CD4-positive, alpha-beta T cell (primary cell): ENCODE measurements at regions of chr12 and their contacts with region 1.

Region 1: GRCh38 chr12:6873094-6874014 is at the start of gene SPSB2:
- DNase-seq: peak; percentile 96 to 100 (median 99)
- ATAC-seq: peak; percentile 89
- H3K4me3 ChIP-seq: peak within 1 kb of the TSS; percentile 93
- H3K4me3 Mint-ChIP-seq: peak within 1 kb of the TSS; percentile 88
- H3K27ac ChIP-seq: peak within 1 kb of the TSS; percentile 58 to 81
- H3K27ac Mint-ChIP-seq: peak within 1 kb of the TSS; percentile 78
- H3K4me1 ChIP-seq: peaks cover 57% of the 10 kb centered on the region
- H3K4me1 Mint-ChIP-seq: peaks cover 54% of the 10 kb centered on the region
- H3K27me3 ChIP-seq: no peaks in the 10 kb centered on the region
- H3K27me3 Mint-ChIP-seq: no peaks in the 10 kb centered on the region
- CTCF ChIP-seq: no peak
- total RNA-seq, gene SPSB2: 3.2 to 3.3 TPM

Region 2: DNA sequence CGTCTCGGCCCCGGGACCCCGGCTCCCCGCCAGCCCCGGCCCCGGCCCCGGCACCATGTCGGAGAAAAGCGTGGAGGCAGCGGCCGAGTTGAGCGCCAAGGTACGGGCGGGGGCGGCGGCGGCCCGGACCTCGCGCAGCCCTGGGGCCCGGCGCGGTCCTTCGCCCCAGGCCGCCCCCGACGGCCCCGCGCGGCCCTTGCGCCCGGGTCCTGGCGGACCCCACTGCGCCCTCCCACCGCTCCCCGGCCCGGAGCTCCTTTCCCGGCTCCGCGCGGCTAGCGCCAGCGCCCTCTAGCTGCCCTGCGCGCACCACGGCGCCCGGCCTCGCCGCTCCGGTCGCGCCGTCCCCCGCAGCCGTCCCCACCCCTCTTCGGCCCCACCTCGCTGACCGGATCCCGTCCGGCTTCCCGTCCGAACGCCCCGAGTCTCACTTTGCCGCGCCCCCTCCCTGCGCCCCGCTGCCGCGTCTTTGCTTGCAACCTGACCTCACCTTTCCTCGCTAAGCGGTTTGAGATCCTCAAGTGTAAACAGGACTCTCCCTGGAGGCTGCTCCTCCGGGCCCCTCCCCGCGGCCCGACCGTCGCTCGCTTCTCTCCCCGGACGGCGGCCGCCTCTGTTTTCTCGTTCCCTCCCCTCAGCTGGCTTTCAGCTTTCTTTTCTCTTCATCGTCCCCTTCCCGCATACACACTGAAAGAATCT is 106.6 kb before region 1 on chr12:
- CTCF ChIA-PET with region 1: no interaction called
- POLR2A ChIA-PET with region 1: no interaction called
- intact Hi-C with region 1: no loop called
- DNase-seq: peak in 12 of 14 experiments; percentile 28 to 79 (median 50)
- ATAC-seq: peak; percentile 65
- H3K4me3 ChIP-seq: peak overlapping the region; percentile 56
- H3K4me3 Mint-ChIP-seq: peak overlapping the region; percentile 93
- H3K27ac ChIP-seq: no peak overlapping the region
- H3K27ac Mint-ChIP-seq: no peak overlapping the region
- H3K4me1 ChIP-seq: peaks cover 46% of the 10 kb centered on the region
- H3K4me1 Mint-ChIP-seq: peaks cover 52% of the 10 kb centered on the region
- H3K27me3 ChIP-seq: peaks cover 22 to 31% of the 10 kb centered on the region in 2 experiments
- H3K27me3 Mint-ChIP-seq: peaks cover 60% of the 10 kb centered on the region
- CTCF ChIP-seq: peak; percentile 38

Region 3: DNA sequence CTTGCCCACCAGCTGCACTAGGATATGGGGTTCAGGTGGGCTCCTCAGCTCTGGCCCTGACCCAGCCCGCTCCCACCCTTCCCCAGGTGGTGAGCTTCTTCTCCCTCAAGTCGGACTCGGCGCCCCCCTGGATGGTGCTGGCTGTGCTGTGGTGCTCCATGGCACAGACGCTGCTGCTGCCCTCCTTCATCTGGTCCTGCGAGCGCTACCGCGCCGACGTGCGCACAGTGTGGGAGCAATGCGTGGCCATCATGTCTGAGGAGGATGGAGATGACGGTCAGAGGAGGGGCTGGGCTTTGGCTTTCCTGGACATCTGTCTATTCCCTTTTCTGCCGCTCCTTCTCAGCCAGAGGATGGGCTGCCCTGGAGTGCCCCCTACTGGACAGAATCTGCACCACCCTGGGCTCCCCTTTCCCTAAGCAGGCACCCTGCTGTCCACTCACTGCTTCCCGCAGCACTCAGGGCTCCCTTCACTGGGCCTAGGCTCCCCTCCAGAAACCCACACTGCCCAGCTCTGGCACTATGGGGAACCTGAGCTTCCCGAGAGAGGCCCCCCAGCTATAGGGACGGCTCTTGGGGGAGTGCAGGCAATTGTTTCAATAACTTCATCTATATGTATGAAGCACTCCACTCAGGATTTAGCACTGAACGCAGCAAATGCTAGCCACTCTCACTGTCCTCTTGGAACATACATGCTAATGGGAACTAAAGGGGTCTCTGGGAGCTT is 47.8 kb before region 1 on chr12:
- CTCF ChIA-PET with region 1: interaction called, 10 read pairs
- POLR2A ChIA-PET with region 1: interaction called, 10 read pairs
- intact Hi-C with region 1: no loop called
- DNase-seq: peak; percentile 71 to 90 (median 80)
- ATAC-seq: peak; percentile 65
- H3K4me3 ChIP-seq: no peak overlapping the region
- H3K4me3 Mint-ChIP-seq: peak overlapping the region; percentile 5
- H3K27ac ChIP-seq: no peak overlapping the region
- H3K27ac Mint-ChIP-seq: no peak overlapping the region
- H3K4me1 ChIP-seq: peaks cover 51% of the 10 kb centered on the region
- H3K4me1 Mint-ChIP-seq: peaks cover 26% of the 10 kb centered on the region
- H3K27me3 ChIP-seq: peaks cover 19 to 29% of the 10 kb centered on the region in 2 experiments
- H3K27me3 Mint-ChIP-seq: peaks cover 32% of the 10 kb centered on the region
- CTCF ChIP-seq: peak; percentile 94

Region 4: GRCh38 chr12:6890789-6891645 is 17.7 kb after region 1 on chr12:
- CTCF ChIA-PET with region 1: interaction called, 153 read pairs
- POLR2A ChIA-PET with region 1: interaction called, 71 read pairs
- intact Hi-C with region 1: loop called (anchors 1 kb)
- DNase-seq: peak; percentile 96 to 100 (median 99)
- ATAC-seq: peak; percentile 95
- H3K4me3 ChIP-seq: peak overlapping the region; percentile 65
- H3K4me3 Mint-ChIP-seq: peak overlapping the region; percentile 88
- H3K27ac ChIP-seq: peak overlapping the region; percentile 84 to 92
- H3K27ac Mint-ChIP-seq: peak overlapping the region; percentile 92
- H3K4me1 ChIP-seq: peaks cover 18% of the 10 kb centered on the region
- H3K4me1 Mint-ChIP-seq: peaks cover 13% of the 10 kb centered on the region
- H3K27me3 ChIP-seq: no peaks in the 10 kb centered on the region
- H3K27me3 Mint-ChIP-seq: no peaks in the 10 kb centered on the region
- CTCF ChIP-seq: peak; percentile 76

Region 5: GRCh38 chr12:6927379-6928024 is 54.1 kb after region 1 on chr12 and contains the start of gene ATN1:
- CTCF ChIA-PET with region 1: interaction called, 10 read pairs
- POLR2A ChIA-PET with region 1: interaction called, 11 read pairs
- intact Hi-C with region 1: no loop called
- DNase-seq: peak in 7 of 14 experiments; percentile 33 to 69 (median 54)
- ATAC-seq: peak; percentile 41
- H3K4me3 ChIP-seq: peak within 1 kb of the TSS; percentile 65
- H3K4me3 Mint-ChIP-seq: peak within 1 kb of the TSS; percentile 95
- H3K27ac ChIP-seq: peak within 1 kb of the TSS; percentile 79 to 82
- H3K27ac Mint-ChIP-seq: peak within 1 kb of the TSS; percentile 87
- H3K4me1 ChIP-seq: peaks cover 49% of the 10 kb centered on the region
- H3K4me1 Mint-ChIP-seq: peaks cover 56% of the 10 kb centered on the region
- H3K27me3 ChIP-seq: no peaks in the 10 kb centered on the region
- H3K27me3 Mint-ChIP-seq: no peaks in the 10 kb centered on the region
- CTCF ChIP-seq: no peak
- total RNA-seq, gene ATN1: 28.7 to 29.6 TPM

Region 6: GRCh38 chr12:6953442-6954315 is 80.3 kb after region 1 on chr12:
- CTCF ChIA-PET with region 1: interaction called, 4 read pairs
- POLR2A ChIA-PET with region 1: interaction called, 17 read pairs
- intact Hi-C with region 1: no loop called
- DNase-seq: peak in 13 of 14 experiments; percentile 50 to 90 (median 69)
- ATAC-seq: peak; percentile 45
- H3K4me3 ChIP-seq: peak overlapping the region; percentile 98
- H3K4me3 Mint-ChIP-seq: peak overlapping the region; percentile 100
- H3K27ac ChIP-seq: peak overlapping the region; percentile 80 to 96
- H3K27ac Mint-ChIP-seq: peak overlapping the region; percentile 97
- H3K4me1 ChIP-seq: peaks cover 94% of the 10 kb centered on the region
- H3K4me1 Mint-ChIP-seq: peaks cover 89% of the 10 kb centered on the region
- H3K27me3 ChIP-seq: no peaks in the 10 kb centered on the region
- H3K27me3 Mint-ChIP-seq: no peaks in the 10 kb centered on the region
- CTCF ChIP-seq: no peak

Region 7: DNA sequence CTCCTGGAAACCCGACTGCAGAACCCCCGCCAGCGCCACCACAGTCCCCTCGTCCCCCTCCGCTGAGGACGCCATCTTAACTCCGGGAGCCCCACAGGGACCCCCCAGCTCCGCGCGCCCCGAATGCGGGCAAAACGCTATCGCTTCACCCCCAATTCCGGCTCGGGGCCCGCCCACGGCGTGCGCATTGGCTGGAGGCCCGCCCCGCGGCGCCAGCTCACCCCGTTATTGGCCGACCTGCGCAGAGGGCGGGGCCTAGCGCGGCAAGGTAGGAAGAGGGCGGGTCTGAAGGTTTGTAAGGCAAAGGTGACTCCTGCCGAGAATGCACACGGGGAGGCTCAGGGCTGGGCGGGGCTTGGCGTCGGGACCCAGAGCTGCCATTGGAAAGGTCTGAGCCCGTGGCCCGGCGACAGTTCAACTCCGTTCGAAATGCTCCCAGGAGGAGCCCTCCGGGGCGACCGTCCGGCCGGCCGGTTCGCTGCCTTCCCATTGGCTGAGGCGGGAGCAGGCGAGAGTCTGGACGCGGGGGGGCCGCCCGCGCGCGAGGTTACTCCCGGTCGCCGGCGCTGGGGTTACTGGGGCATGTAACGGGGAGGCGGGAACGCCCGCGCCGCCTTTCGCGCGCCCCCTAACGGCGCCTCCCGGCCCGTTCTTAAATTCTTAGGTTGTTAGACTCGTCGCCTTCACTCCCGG is 145.1 kb after region 1 on chr12 and contains the start of gene LPCAT3:
- CTCF ChIA-PET with region 1: interaction called, 8 read pairs
- POLR2A ChIA-PET with region 1: interaction called, 3 read pairs
- intact Hi-C with region 1: loop called (anchors 2 to 5 kb)
- DNase-seq: peak; percentile 94 to 99 (median 96)
- ATAC-seq: peak; percentile 96
- H3K4me3 ChIP-seq: peak within 1 kb of the TSS; percentile 98
- H3K4me3 Mint-ChIP-seq: peak within 1 kb of the TSS; percentile 87
- H3K27ac ChIP-seq: peak within 1 kb of the TSS; percentile 87 to 89
- H3K27ac Mint-ChIP-seq: peak within 1 kb of the TSS; percentile 62
- H3K4me1 ChIP-seq: peaks cover 24% of the 10 kb centered on the region
- H3K4me1 Mint-ChIP-seq: peaks cover 30% of the 10 kb centered on the region
- H3K27me3 ChIP-seq: no peaks in the 10 kb centered on the region
- H3K27me3 Mint-ChIP-seq: no peaks in the 10 kb centered on the region
- CTCF ChIP-seq: peak; percentile 87
- total RNA-seq, gene LPCAT3: 11.8 to 14.8 TPM

Region 8: GRCh38 chr12:7259060-7259459 is 385.7 kb after region 1 on chr12:
- CTCF ChIA-PET with region 1: no interaction called
- POLR2A ChIA-PET with region 1: no interaction called
- intact Hi-C with region 1: no loop called
- DNase-seq: no peak
- ATAC-seq: no peak
- H3K4me3 ChIP-seq: no peak overlapping the region
- H3K4me3 Mint-ChIP-seq: no peak overlapping the region
- H3K27ac ChIP-seq: no peak overlapping the region
- H3K27ac Mint-ChIP-seq: no peak overlapping the region
- H3K4me1 ChIP-seq: no peaks in the 10 kb centered on the region
- H3K4me1 Mint-ChIP-seq: no peaks in the 10 kb centered on the region
- H3K27me3 ChIP-seq: no peaks in the 10 kb centered on the region
- H3K27me3 Mint-ChIP-seq: peaks cover 9% of the 10 kb centered on the region
- CTCF ChIP-seq: no peak